Dorsolateral prefrontal cortex (tissue), 120 donors: ENCODE measurements at regions of chr20 and their contacts with region 1.

Region 1: DNA sequence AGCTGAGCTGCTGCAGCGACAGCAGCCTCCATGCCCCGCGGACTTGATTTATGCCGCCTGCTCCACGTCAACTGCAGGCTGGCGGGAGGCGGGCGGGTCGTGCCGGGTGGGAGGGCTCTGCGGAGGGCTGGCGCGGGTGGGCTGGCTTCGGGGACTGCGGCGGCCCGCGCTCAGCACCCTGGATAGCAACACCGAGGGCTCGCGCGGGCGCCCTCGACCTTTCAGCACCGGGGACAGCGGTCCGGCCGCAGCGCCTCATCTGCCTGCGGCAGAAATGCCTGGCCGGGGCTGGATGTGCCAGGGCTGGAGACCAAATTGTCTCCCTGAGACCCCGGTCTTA is 792 bp downstream of the SNAP25 start:
- DNase-seq: peak; percentile 58 to 86 (median 72)
- H3K4me3 ChIP-seq: peak overlapping the region; percentile 47 to 85 (median 72)
- H3K27ac ChIP-seq: peak overlapping the region in 57 of 59 donors; percentile 6 to 99 (median 96)
- H3K27me3 ChIP-seq: no peaks in the 10 kb centered on the region
- CTCF ChIP-seq: peak in 38 of 56 donors; percentile 9 to 53 (median 30)

Region 2: GRCh38 chr20:9978397-9979004 is 240.9 kb before region 1 on chr20:
- intact Hi-C with region 1: loop called (anchors 5 kb)
- DNase-seq: peak in 3 of 10 donors; percentile 44 to 66 (median 55)
- H3K4me3 ChIP-seq: peak overlapping the region in 16 of 59 donors; percentile 4 to 39 (median 15)
- H3K27ac ChIP-seq: peak overlapping the region in 12 of 59 donors; percentile 0 to 58 (median 25)
- H3K27me3 ChIP-seq: no peaks in the 10 kb centered on the region
- CTCF ChIP-seq: peak; percentile 59 to 98 (median 87)

Region 3: GRCh38 chr20:10090588-10091166 is 128.7 kb before region 1 on chr20:
- intact Hi-C with region 1: loop called (anchors 5 to 10 kb)
- DNase-seq: peak in 9 of 10 donors; percentile 29 to 62 (median 48)
- H3K4me3 ChIP-seq: no peak overlapping the region
- H3K27ac ChIP-seq: peak overlapping the region in 9 of 59 donors; percentile 1 to 25 (median 11)
- H3K27me3 ChIP-seq: no peaks in the 10 kb centered on the region
- CTCF ChIP-seq: peak in 54 of 56 donors; percentile 54 to 85 (median 73)

Region 4: GRCh38 chr20:10171864-10172751 is 47.3 kb before region 1 on chr20:
- intact Hi-C with region 1: loop called (anchors 1 to 2 kb)
- DNase-seq: peak; percentile 49 to 90 (median 78)
- H3K4me3 ChIP-seq: peak overlapping the region; percentile 29 to 74 (median 55)
- H3K27ac ChIP-seq: peak overlapping the region in 58 of 59 donors; percentile 45 to 97 (median 87)
- H3K27me3 ChIP-seq: no peaks in the 10 kb centered on the region
- CTCF ChIP-seq: peak in 1 of 56 donors; percentile 18

Region 5: DNA sequence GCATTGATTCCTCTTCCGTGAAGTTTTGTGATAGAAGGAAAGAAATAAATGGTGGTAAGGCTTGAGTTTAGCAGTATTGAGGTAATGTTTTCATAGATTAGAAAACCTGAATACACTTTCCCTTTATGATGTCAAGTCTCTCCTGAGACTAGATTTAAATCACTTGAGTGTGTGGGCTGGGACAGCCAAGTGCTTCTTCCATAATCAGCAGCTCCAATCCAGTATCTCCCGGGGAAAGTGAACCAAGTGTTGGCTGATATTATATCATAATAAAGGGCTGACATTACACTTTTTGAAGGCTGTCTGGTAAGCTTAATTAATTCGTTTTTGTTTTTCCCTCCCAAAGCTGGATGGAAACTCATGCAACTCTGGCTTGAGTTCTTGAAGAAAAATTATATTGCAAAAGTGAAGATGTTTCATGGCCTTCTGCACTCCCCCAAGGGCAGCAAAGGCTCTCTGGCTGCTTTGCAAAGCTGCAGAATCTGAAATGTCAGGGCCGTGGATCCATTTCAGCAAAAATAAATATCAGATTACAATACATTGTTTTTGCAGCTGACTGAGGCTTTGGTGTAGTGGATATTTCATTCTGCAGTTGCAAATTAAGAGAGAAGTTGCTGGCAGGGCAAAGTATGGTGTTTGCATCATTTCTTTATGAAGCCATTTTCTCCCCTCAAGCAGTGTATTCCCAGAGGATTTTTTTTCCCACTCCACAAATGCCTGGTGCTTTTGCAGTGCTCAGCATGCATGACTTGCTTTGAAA is 113.4 kb after region 1 on chr20:
- intact Hi-C with region 1: loop called in 1 of 2 experiments (anchors 5 kb)
- DNase-seq: no peak
- H3K4me3 ChIP-seq: no peak overlapping the region
- H3K27ac ChIP-seq: peak overlapping the region in 51 of 59 donors; percentile 1 to 85 (median 62)
- H3K27me3 ChIP-seq: no peaks in the 10 kb centered on the region
- CTCF ChIP-seq: no peak

Region 6: GRCh38 chr20:10434467-10434831 is 215.0 kb after region 1 on chr20:
- intact Hi-C with region 1: loop called (anchors 2 kb)
- DNase-seq: peak; percentile 83 to 95 (median 92)
- H3K4me3 ChIP-seq: peak overlapping the region; percentile 68 to 100 (median 94)
- H3K27ac ChIP-seq: peak overlapping the region; percentile 84 to 99 (median 98)
- H3K27me3 ChIP-seq: no peaks in the 10 kb centered on the region
- CTCF ChIP-seq: peak in 2 of 56 donors; percentile 6 to 12